ENCODE measurements at regions of chr14 and their contacts with region 1.

Region 1: DNA sequence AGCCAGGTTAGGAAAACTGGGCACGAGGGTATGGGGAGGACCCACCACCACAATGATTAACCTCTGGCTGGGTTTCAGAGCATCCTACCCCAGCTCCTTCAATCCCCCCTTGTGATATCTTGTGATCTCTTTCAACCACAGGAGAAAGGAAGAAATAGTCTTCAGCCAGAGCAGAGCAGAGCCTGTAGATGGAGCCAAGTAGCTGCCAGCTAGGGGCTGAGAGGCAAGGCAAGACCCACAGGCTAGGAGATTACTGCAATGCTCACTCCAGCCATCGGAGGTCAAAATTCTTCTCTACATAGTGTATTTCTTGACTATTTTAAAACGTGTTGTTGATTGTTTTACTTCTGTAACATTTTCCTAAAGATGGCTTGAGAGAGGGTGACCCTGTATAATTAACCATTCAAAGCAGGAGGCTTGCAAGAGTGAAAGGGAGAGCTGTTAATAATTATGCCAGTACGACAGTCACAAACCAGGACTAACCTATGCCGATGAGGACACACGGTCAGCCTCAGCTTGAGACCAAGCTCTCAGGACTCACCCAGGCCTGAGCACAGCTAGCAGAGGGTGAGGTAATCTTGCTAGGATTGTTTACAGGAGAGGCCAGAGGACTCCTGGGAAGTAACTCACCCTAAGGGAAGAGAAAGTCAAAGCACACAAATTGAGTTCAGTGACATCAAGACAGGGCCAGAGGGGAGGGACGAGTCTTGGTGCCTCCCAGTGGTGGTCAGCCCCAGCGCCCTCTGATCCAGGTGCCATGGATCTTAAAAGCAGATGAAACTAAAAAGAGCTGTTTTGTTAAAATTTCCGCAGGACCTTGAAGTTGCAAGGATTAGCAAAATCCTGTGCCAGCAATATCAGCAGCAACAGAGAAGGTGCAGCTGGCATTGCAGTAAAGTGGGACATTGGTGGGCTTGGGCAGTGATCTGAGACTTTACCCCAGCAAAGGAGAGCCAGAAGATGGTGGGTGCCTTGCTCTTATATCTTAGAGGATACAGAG is 29.8 kb upstream of the CDKN3 start:
- DNase-seq: peak; percentile 49 to 55
- H3K4me3 ChIP-seq: no peak overlapping the region
- H3K27ac ChIP-seq: no peak overlapping the region
- H3K4me1 ChIP-seq: 0 out of 2 replicates have a peak, but pooled peaks cover 7% of the 10 kb centered on the region
- H3K27me3 ChIP-seq: no peaks in the 10 kb centered on the region
- CTCF ChIP-seq: peak; percentile 54

Region 2: DNA sequence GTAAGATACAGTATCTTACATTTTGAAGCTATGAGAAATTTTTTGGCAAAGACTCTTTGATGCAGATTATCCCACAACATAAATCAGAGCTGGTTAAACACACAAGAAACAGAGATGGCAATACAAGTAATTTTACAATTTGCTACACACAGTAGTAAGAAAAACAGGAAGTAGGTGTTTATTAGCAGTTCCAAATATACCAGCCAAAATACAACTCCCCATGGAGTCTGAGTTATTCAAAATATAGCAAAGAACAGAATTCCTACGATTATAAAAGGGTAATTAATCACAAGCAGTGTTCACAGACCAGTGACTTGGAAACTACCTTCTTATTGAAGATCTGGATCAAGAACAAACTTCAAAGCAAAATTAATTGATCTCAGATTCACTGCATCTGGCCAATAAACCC is 494.4 kb before region 1 on chr14:
- CTCF ChIA-PET with region 1: no interaction called
- POLR2A ChIA-PET with region 1: no interaction called
- intact Hi-C with region 1: no loop called
- DNase-seq: no peak
- H3K4me3 ChIP-seq: no peak overlapping the region
- H3K27ac ChIP-seq: no peak overlapping the region
- H3K4me1 ChIP-seq: no peaks in the 10 kb centered on the region
- H3K27me3 ChIP-seq: no peaks in the 10 kb centered on the region
- CTCF ChIP-seq: no peak

Region 3: GRCh38 chr14:54040846-54041245 is 326.2 kb before region 1 on chr14:
- CTCF ChIA-PET with region 1: no interaction called
- POLR2A ChIA-PET with region 1: no interaction called
- intact Hi-C with region 1: no loop called
- DNase-seq: peak in 1 of 2 experiments; percentile 48
- H3K4me3 ChIP-seq: no peak overlapping the region
- H3K27ac ChIP-seq: no peak overlapping the region
- H3K4me1 ChIP-seq: peaks cover 11% of the 10 kb centered on the region
- H3K27me3 ChIP-seq: no peaks in the 10 kb centered on the region
- CTCF ChIP-seq: no peak

Region 4: GRCh38 chr14:54420013-54420809 is 53.2 kb after region 1 on chr14:
- CTCF ChIA-PET with region 1: interaction called, 6 read pairs
- POLR2A ChIA-PET with region 1: no interaction called
- intact Hi-C with region 1: loop called (anchors 5 kb)
- DNase-seq: peak in 1 of 2 experiments; percentile 43
- H3K4me3 ChIP-seq: no peak overlapping the region
- H3K27ac ChIP-seq: no peak overlapping the region
- H3K4me1 ChIP-seq: no peaks in the 10 kb centered on the region
- H3K27me3 ChIP-seq: no peaks in the 10 kb centered on the region
- CTCF ChIP-seq: peak; percentile 67

Region 5: GRCh38 chr14:54893151-54893760 is 526.2 kb after region 1 on chr14:
- CTCF ChIA-PET with region 1: no interaction called
- POLR2A ChIA-PET with region 1: no interaction called
- intact Hi-C with region 1: loop called (anchors 10 kb)
- DNase-seq: peak in 1 of 2 experiments; percentile 57
- H3K4me3 ChIP-seq: no peak overlapping the region
- H3K27ac ChIP-seq: no peak overlapping the region
- H3K4me1 ChIP-seq: no peaks in the 10 kb centered on the region
- H3K27me3 ChIP-seq: no peaks in the 10 kb centered on the region
- CTCF ChIP-seq: peak; percentile 86

Measured in PC-9 (cell line).